Activated B cell treated with CpG ODN at 0.5 μM for 24 hours (primary cell): ENCODE measurements at regions of chr11 and their contacts with region 1.

Region 1: DNA sequence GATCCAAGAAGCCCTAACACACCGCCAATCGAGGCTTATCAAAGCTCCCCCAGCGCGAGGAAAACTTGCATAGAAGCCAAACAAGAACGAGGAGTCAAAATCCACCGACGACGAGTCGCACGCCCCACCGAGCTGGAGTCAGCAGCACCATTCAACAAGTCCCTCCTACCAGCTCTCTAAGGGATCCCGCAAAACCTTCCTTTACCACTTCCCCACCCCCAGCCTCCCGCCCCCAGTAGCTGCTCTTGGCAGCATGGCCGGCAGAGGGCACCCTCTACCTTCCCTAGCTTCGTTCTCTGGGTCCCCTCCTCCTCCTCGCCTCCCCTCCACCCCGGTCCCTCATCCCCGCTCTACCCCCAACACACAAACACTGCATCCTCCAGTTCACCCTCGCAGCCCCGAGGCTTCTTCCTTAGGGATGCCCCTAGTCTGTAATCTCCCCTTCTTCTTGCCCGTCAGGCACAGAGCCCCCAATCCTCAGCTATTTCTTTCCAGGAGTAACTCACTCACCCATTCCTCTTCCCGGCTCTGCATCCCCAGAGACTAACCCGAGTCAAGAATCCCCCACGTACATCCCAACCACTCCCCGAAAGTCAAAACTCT is 1.3 kb downstream of the BDNF start:
- DNase-seq: no peak
- ATAC-seq: peak; percentile 76
- H3K4me3 Mint-ChIP-seq: peak overlapping the region; percentile 62
- H3K27ac Mint-ChIP-seq: no peak overlapping the region
- H3K4me1 Mint-ChIP-seq: peaks cover 27% of the 10 kb centered on the region
- H3K27me3 Mint-ChIP-seq: peaks cover 46% of the 10 kb centered on the region
- CTCF ChIP-seq: no peak

Region 2: DNA sequence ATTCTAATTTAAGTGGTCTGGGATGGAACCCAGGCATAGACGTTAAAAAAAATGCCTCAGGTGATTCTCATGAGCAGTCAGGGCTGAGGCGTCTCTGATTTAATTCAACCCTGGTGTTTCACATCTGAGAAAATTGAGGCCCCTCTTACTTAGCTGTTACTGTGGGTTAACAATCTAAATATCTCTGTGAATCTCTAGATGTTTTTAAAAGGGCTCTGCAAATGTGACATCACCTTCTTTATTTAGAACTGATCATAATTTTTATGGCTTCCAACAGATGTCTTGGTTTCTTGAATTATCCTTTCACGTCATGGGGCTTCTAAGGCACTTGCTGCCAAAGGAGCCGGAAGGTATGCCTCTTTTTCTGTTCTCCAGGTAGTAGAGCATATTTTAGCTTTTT is 116.4 kb before region 1 on chr11:
- CTCF ChIA-PET with region 1: no interaction called
- POLR2A ChIA-PET with region 1: no interaction called
- intact Hi-C with region 1: no loop called
- DNase-seq: no peak
- ATAC-seq: no peak
- H3K4me3 Mint-ChIP-seq: no peak overlapping the region
- H3K27ac Mint-ChIP-seq: no peak overlapping the region
- H3K4me1 Mint-ChIP-seq: no peaks in the 10 kb centered on the region
- H3K27me3 Mint-ChIP-seq: no peaks in the 10 kb centered on the region
- CTCF ChIP-seq: no peak

Region 3: GRCh38 chr11:27720277-27720830 is 21.4 kb after region 1 on chr11:
- CTCF ChIA-PET with region 1: no interaction called
- POLR2A ChIA-PET with region 1: no interaction called
- intact Hi-C with region 1: loop called (anchors 2 kb)
- DNase-seq: no peak
- ATAC-seq: no peak
- H3K4me3 Mint-ChIP-seq: no peak overlapping the region
- H3K27ac Mint-ChIP-seq: no peak overlapping the region
- H3K4me1 Mint-ChIP-seq: peaks cover 6% of the 10 kb centered on the region
- H3K27me3 Mint-ChIP-seq: peaks cover 59% of the 10 kb centered on the region
- CTCF ChIP-seq: no peak

Region 4: DNA sequence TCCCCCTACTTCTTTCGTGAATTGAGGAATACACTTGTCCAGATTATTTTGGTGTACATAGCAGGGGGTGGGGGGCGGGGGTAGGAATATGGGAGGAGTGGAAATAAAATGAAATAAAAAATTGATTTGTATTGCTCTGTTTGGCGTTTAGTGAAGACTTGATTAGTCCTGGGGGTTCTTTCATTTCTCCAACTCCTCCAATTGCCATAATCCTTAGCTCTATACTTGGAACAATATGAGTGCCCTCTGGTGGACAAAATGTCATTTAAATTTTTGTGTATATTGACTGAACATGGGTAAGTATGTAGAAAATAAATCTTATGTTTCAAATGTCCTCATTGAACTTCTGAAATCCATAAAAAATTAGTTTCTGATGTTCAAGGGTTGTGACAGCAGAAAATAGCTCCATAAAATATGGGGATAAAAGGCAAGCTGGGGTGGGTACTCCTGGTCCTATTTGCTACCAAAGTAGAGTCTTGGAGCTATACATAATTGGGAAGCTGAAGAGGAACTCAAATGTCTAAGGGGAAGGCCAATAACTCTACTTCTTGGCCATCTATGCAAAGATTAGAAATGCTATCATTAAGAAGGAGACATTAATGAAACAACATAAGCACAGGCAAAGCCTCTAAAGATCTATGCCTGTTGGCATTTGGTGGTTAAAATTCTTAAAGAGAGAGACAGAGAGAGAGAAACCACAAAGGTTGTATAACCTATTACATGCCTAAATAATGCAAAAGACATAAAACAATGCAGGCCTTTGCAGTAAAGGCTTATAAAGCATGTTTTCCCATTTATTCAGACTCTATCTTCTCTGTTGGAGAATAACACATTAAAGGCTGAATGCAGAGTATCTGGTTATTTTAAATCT is 830.8 kb after region 1 on chr11:
- CTCF ChIA-PET with region 1: interaction called, 50 read pairs
- POLR2A ChIA-PET with region 1: no interaction called
- intact Hi-C with region 1: no loop called
- DNase-seq: no peak
- ATAC-seq: no peak
- H3K4me3 Mint-ChIP-seq: no peak overlapping the region
- H3K27ac Mint-ChIP-seq: no peak overlapping the region
- H3K4me1 Mint-ChIP-seq: no peaks in the 10 kb centered on the region
- H3K27me3 Mint-ChIP-seq: no peaks in the 10 kb centered on the region
- CTCF ChIP-seq: no peak

Region 5: DNA sequence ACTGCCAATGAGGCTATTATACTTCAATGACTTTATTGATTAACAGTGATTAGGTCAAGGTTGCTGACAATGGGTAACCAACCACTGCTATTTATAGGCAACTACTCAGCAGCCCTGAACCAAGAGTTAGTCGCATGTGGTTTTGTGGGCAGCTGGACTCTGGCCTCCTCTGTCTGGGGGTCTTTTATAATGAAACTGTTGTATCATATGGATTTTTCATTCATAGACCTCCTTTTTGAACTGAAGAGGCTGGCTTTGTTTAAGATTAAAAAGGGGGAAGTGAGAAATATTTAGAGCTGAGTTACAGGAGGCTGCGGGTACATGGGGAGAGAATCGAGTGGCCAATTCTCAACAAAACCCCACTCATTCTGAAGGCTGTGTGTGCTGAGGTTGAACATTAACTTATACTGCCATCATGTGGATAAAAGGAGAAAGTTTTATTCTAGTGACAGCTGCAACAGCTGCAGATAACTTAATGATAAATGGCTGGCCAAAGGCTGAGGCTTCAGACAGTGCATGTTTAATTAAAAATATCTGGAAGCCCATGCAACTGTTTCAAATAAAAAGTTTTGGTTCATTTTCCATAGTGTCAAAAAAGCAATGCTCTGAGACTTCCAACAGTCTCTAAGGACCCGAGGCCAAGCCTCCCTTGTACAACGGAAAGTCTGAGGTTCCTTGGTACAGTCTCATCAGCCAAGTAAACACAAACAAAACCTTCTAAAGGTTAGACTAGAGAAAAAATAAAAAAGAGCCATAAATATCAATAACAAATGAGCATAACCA is 1635.2 kb after region 1 on chr11:
- CTCF ChIA-PET with region 1: no interaction called
- POLR2A ChIA-PET with region 1: no interaction called
- intact Hi-C with region 1: loop called (anchors 5 kb)
- DNase-seq: no peak
- ATAC-seq: no peak
- H3K4me3 Mint-ChIP-seq: no peak overlapping the region
- H3K27ac Mint-ChIP-seq: no peak overlapping the region
- H3K4me1 Mint-ChIP-seq: no peaks in the 10 kb centered on the region
- H3K27me3 Mint-ChIP-seq: no peaks in the 10 kb centered on the region
- CTCF ChIP-seq: no peak